ENCODE measurements at regions of chr16 and their contacts with region 1.

Region 1: DNA sequence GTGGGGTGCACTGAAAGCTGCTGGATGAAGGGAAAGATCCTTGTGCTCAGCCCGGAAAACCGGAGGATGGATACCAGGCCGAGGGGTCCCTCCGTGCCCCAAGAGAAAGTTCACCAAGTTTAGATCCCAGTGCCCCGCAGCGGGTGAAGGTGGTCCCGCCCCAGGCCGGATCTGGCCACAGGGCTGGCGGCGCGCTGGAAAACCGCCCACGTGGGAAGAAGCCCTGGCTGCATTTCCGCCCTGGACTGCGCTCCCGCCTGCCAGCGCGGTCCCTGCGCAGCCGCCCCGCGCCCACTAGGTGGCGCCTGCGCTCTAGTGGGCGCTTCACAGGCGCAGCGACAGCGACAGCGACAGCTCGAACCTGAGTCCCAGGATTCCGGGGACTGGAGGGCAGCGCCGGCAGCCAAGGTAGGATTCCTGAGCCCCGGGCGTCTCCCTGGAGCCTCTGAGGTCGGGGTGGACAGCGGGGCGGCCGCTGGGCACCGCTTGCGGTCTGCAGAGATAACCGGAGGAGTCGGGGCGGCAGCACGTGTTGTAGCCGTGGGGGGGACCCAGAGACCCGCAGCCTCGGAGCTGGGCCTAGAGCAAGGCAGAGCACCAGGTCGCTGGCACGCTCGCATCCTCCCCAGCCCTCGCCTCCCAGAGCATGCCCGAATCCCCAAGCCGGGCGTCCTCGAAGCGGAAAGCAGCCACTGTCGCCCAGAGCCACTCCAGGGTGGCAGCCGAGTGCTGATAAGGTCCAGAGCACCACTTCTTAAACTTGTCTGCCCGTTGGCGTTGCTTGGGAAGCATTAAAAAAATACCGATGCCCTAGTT is at the start of gene CHD9:
- DNase-seq: peak; percentile 84 to 90 (median 86)
- H3K4me3 ChIP-seq: peak within 1 kb of the TSS; percentile 45
- H3K27ac ChIP-seq: peak within 1 kb of the TSS; percentile 56 to 63
- H3K4me1 ChIP-seq: peaks cover 4% of the 10 kb centered on the region
- H3K27me3 ChIP-seq: no peaks in the 10 kb centered on the region
- CTCF ChIP-seq: peak; percentile 98 to 100 (median 98)
- EP300 ChIP-seq: no peak
- POLR2A ChIP-seq: peak; percentile 21
- total RNA-seq, gene CHD9: 45.1 to 100 (median 87.5) TPM

Region 2: GRCh38 chr16:53115047-53115446 is 60.2 kb after region 1 on chr16:
- intact Hi-C with region 1: no loop called
- DNase-seq: no peak
- H3K4me3 ChIP-seq: no peak overlapping the region
- H3K27ac ChIP-seq: no peak overlapping the region
- H3K4me1 ChIP-seq: no peaks in the 10 kb centered on the region
- H3K27me3 ChIP-seq: no peaks in the 10 kb centered on the region
- CTCF ChIP-seq: no peak
- EP300 ChIP-seq: no peak
- POLR2A ChIP-seq: no peak

Region 3: DNA sequence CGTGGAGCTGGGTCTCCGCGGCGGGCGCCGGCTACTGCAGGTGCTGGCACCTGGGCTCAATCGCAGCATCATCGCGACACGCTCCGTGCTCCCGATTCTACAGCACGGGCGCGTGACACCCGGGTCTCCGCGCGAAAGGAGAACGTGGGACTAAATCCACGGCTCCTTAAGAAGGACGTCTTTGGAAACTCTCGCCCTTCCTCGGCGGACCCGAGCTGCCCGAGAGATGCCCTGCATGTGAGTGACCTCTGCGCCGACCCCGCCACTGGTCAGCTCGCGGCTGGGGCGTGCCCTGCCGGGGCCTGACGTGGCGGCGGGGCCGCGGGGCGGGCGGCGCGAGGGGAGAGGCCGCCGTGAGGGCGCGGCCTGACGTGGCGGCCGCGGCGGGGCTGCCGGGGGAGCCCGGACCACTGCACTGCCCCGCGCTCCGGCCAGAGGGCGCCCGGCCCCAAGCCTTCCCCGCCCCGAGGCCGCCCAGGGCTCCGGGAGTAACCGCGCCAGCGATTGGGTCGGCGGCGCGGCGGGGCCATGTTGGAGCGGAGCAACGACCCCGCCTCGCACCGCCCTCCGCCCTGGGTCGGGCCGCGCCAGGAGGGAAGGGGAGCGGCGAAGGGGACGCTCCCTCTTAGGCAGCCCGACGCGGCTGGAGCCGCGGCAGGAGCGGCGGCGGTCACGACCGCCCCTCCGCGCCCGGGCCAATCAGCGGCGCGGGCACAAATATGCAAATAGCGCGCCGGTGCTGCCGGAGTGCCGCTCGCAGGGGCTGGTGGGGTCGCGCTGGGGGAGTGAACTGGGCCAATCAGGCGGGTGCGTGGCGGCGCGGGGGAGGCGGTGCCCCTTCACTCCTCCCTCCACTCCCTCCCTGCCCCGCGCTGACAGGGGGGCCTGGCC is 75.5 kb after region 1 on chr16:
- intact Hi-C with region 1: loop called in 3 of 4 experiments (anchors 2 kb)
- DNase-seq: peak; percentile 94 to 96 (median 95)
- H3K4me3 ChIP-seq: peak overlapping the region; percentile 81
- H3K27ac ChIP-seq: peak overlapping the region; percentile 56 to 91
- H3K4me1 ChIP-seq: no peaks in the 10 kb centered on the region
- H3K27me3 ChIP-seq: no peaks in the 10 kb centered on the region
- CTCF ChIP-seq: peak; percentile 51 to 90 (median 90)
- EP300 ChIP-seq: no peak
- POLR2A ChIP-seq: peak; percentile 22

Region 4: DNA sequence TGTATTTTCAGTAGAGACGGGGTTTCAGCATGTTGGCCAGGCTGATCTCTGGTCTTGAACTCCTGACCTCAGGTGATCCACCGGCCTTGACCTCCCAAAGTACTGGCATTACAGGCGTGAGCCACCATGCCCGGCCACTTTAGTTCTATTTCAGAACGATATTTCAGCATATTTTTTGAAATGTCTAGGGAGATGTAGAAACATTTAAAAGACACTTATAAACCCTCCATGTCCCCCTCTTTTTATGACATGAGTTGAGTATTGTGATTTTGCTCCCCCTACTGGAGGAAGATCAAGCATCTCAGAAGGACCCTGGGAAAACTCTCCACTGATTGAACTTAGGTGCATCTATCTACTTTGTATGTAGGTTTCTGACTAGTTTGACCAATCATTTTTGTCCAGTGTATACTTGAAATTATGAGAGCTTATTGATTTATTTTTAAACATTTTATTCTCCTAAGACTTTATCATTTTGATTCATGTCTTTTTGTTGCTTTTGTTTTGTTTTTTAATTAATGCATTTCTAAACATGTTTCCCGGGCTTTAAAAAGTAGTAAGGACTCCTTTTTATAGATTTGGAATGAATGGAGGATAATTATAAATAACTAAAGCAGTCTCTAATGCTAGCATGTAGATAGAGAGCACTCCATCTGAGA is 105.0 kb after region 1 on chr16:
- intact Hi-C with region 1: loop called in 1 of 4 experiments (anchors 2 kb)
- DNase-seq: peak in 2 of 5 donors; percentile 25 to 37
- H3K4me3 ChIP-seq: no peak overlapping the region
- H3K27ac ChIP-seq: peak overlapping the region in 1 of 2 donors; percentile 13
- H3K4me1 ChIP-seq: no peaks in the 10 kb centered on the region
- H3K27me3 ChIP-seq: no peaks in the 10 kb centered on the region
- CTCF ChIP-seq: peak; percentile 43 to 59 (median 44)
- EP300 ChIP-seq: no peak
- POLR2A ChIP-seq: no peak

Region 5: DNA sequence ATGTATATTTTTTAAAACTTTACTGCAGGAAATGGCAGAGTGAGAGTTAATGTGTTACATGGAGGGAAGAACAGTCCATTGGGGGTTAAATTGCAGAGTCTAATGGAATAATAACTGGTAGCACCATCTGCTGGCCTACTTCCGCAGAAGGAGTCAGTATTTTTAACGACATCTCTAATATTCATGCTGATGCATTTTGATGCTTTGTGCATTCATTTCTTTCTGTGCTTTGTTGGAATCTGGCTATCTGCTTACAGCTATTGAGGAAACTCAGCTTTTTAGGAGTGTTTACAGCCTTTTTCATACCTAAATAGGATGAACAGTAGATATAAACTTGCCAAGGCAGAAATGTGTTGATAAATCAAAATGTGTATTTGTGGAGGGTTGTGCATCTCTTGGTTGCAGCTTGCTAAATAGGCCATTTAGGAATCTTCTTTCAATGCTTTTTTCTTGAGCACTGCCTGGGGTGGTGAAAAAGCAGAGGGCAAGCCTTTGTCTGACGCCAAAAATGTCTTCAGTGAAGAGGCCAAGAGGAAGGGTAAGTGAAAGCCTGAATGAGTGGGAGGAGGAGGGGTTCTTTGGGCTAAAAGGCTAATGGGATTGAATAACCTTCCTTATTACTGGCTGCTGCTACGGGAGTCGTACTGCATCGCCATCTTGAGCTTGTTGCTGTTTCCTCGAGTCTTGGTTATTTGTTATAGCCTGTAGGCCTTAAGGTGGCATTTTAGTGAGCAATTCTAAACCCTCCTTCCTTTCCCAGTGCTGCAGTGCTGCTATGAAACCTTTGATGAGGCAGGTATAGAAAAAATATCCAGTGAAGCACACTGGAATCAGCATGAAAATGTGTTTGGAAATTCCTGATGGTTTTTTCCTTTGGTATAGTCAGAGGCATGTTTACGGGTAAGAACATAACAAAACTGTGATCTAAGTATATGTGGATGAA is 153.2 kb after region 1 on chr16:
- intact Hi-C with region 1: loop called in 2 of 4 experiments (anchors 5 to 10 kb)
- DNase-seq: peak in 4 of 5 donors; percentile 20 to 60 (median 32)
- H3K4me3 ChIP-seq: peak overlapping the region; percentile 29
- H3K27ac ChIP-seq: peak overlapping the region in 1 of 2 donors; percentile 81
- H3K4me1 ChIP-seq: no peaks in the 10 kb centered on the region
- H3K27me3 ChIP-seq: no peaks in the 10 kb centered on the region
- CTCF ChIP-seq: peak; percentile 44 to 73 (median 68)
- EP300 ChIP-seq: no peak
- POLR2A ChIP-seq: peak; percentile 14

Region 6: GRCh38 chr16:53282975-53283946 is 228.4 kb after region 1 on chr16:
- intact Hi-C with region 1: loop called in 1 of 4 experiments (anchors 10 kb)
- DNase-seq: no peak
- H3K4me3 ChIP-seq: no peak overlapping the region
- H3K27ac ChIP-seq: no peak overlapping the region
- H3K4me1 ChIP-seq: no peaks in the 10 kb centered on the region
- H3K27me3 ChIP-seq: no peaks in the 10 kb centered on the region
- CTCF ChIP-seq: peak; percentile 14 to 29 (median 16)
- EP300 ChIP-seq: no peak
- POLR2A ChIP-seq: no peak

Region 7: GRCh38 chr16:53435066-53435688 is 380.3 kb after region 1 on chr16:
- intact Hi-C with region 1: loop called in 1 of 4 experiments (anchors 10 kb)
- DNase-seq: peak; percentile 53 to 71 (median 63)
- H3K4me3 ChIP-seq: peak overlapping the region; percentile 83
- H3K27ac ChIP-seq: peak overlapping the region; percentile 70 to 90
- H3K4me1 ChIP-seq: no peaks in the 10 kb centered on the region
- H3K27me3 ChIP-seq: no peaks in the 10 kb centered on the region
- CTCF ChIP-seq: no peak
- EP300 ChIP-seq: no peak
- POLR2A ChIP-seq: peak; percentile 21